ENCODE measurements at regions of chr22 and their contacts with region 1.

Region 1: DNA sequence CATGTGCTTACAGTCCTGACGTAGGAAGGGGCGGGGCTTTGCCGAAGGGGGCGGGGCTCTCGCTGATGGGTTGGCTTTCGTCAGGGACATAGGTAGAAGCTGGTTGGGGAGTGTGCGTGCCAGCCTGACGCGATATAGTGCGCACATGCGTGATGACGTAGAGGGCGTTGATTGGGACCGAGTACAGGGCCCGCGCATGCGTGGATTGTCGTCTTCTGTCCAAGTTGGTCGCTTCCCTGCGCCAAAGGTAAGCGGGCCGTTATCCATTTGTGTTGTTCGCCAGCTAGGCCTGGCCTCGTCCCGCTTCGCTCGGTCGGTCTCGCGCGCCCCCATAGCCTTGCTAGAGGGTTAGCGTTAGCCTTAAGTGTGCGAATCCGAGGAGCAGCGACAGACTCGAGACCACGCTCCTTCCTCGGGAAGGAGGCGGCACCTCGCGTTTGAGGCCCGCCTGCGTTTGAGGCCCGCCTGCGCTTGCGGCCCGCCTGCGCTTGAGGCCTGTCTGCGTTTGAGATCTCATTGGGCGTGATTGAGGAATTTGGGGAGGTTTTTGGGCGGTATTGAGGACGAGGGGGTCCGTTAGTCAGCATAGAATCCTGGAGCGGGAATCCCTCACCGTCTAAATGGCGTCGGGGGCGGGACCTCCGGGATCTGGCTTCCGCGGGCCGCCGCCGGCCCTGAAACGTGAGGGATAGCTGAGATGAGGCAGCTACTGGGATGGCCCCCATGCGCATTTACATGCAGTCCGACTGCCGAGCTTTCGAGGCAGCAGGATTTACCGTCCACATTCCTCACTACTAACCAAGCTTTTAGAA is at the start of gene XRCC6:
- DNase-seq: peak; percentile 97
- H3K4me3 Mint-ChIP-seq: peak within 1 kb of the TSS; percentile 93
- H3K27ac Mint-ChIP-seq: peak within 1 kb of the TSS; percentile 94
- H3K4me1 Mint-ChIP-seq: peaks cover 50% of the 10 kb centered on the region
- H3K27me3 Mint-ChIP-seq: no peaks in the 10 kb centered on the region
- total RNA-seq, gene XRCC6: 367 and 368 TPM in 2 replicates

Region 2: DNA sequence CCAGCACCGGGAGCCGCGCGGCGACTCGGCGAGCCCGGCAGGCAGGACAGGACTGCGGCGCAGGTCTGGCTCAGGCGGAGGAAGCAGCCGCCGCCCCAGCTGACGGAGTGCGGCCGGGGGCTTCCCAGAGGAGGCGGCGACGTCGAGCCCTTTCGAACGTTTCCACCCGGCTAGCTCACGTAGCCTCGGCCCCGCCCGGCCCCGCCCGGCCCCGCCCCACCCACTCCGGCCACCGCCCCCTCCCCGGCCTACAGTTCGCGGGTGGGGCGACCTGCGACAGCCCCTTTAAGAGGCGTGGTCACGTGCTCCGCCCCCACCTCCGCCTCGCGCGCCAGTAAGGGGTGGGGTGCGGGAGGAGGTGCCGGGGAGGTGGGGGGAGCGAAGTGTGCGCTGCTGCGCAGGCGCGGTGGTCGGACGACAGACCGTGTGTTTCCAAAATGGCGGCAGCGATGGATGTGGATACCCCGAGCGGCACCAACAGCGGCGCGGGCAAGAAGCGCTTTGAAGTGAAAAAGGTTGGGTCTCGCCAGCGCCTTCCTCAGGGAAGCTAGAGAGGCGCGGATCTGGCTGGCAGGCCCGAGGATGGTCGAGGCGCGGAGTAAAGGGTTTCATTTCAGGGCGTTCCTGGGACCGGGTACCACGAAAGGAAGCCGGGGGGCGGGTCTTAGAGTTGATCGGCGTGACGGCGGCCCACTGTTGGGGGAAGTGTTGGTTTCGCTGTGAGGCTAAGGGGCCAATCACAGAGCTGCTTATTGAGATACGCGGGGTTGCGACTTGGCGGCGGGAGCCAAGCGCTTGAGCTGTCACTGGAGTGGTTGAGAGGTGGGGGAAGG is 670.1 kb before region 1 on chr22 and contains the start of gene RBX1:
- intact Hi-C with region 1: loop called (anchors 1 kb)
- DNase-seq: peak; percentile 98
- H3K4me3 Mint-ChIP-seq: peak within 1 kb of the TSS; percentile 98
- H3K27ac Mint-ChIP-seq: peak within 1 kb of the TSS; percentile 98
- H3K4me1 Mint-ChIP-seq: peaks cover 33% of the 10 kb centered on the region
- H3K27me3 Mint-ChIP-seq: no peaks in the 10 kb centered on the region
- total RNA-seq, gene RBX1: 90.9 and 94.4 TPM in 2 replicates

Region 3: DNA sequence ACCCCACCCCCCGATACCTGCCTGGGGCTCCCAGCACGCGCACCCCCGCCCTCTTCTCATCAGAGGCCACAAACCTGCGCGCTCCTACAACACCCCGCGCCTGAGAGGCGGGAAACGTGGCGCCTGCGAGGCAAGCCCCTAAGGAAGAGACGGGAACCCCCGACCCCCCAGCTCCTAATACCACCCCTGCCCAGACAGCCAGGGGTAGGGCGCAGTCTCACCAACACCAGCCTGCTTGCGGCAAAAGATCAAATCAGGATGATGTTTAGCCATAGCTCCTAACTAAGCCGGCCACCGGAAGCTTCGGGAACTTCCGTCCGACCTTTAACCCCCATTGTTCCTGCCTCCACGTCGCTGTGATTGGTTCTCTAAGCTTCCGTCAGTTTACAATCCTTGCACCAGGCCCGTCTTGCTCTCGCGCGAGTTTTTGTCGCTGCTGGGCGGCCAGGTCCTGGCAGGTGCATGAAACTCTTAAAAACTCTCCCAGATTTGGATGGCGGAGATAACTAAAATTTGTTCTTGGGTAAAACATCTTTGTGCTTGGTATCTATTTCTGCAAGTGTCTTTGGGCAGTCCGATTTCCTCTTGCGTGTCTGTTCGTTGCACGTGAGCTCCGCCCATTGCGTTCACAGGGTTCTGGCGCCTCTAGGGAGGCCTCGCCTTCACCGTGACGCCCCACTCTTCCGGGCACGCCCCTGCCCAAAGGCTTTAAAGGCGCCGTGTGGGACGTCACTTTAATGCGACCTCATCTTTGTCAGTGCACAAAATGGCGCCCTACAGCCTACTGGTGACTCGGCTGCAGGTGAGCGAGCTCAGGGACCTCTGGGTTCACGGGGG is 152.7 kb before region 1 on chr22 and contains the starts of genes ACO2 and PHF5A:
- intact Hi-C with region 1: loop called (anchors 1 kb)
- DNase-seq: peak; percentile 98
- H3K4me3 Mint-ChIP-seq: peak within 1 kb of the TSS; percentile 87
- H3K27ac Mint-ChIP-seq: peak within 1 kb of the TSS; percentile 99
- H3K4me1 Mint-ChIP-seq: peaks cover 22% of the 10 kb centered on the region
- H3K27me3 Mint-ChIP-seq: no peaks in the 10 kb centered on the region
- total RNA-seq, gene ACO2: 99.1 and 101 TPM in 2 replicates
- total RNA-seq, gene PHF5A: 83.7 and 96.8 TPM in 2 replicates

Region 4: GRCh38 chr22:41603873-41604332 is 17.4 kb before region 1 on chr22:
- intact Hi-C with region 1: loop called (anchors 1 kb)
- DNase-seq: peak; percentile 66
- H3K4me3 Mint-ChIP-seq: no peak overlapping the region
- H3K27ac Mint-ChIP-seq: peak overlapping the region; percentile 62
- H3K4me1 Mint-ChIP-seq: peaks cover 44% of the 10 kb centered on the region
- H3K27me3 Mint-ChIP-seq: peaks cover 9% of the 10 kb centered on the region

Region 5: GRCh38 chr22:41688365-41689211 is 67.3 kb after region 1 on chr22 and contains the start of gene SNU13:
- intact Hi-C with region 1: loop called (anchors 1 kb)
- DNase-seq: peak; percentile 92
- H3K4me3 Mint-ChIP-seq: peak within 1 kb of the TSS; percentile 98
- H3K27ac Mint-ChIP-seq: peak within 1 kb of the TSS; percentile 98
- H3K4me1 Mint-ChIP-seq: peaks cover 17% of the 10 kb centered on the region
- H3K27me3 Mint-ChIP-seq: no peaks in the 10 kb centered on the region
- total RNA-seq, gene SNU13: 337 and 339 TPM in 2 replicates

Region 6: GRCh38 chr22:41699264-41700014 is 78.1 kb after region 1 on chr22 and contains the start of gene MEI1:
- intact Hi-C with region 1: no loop called
- DNase-seq: peak; percentile 84
- H3K4me3 Mint-ChIP-seq: peak within 1 kb of the TSS; percentile 70
- H3K27ac Mint-ChIP-seq: peak within 1 kb of the TSS; percentile 82
- H3K4me1 Mint-ChIP-seq: peaks cover 13% of the 10 kb centered on the region
- H3K27me3 Mint-ChIP-seq: peaks cover 8% of the 10 kb centered on the region
- total RNA-seq, gene MEI1: 22.3 TPM in 2 replicates

Region 7: DNA sequence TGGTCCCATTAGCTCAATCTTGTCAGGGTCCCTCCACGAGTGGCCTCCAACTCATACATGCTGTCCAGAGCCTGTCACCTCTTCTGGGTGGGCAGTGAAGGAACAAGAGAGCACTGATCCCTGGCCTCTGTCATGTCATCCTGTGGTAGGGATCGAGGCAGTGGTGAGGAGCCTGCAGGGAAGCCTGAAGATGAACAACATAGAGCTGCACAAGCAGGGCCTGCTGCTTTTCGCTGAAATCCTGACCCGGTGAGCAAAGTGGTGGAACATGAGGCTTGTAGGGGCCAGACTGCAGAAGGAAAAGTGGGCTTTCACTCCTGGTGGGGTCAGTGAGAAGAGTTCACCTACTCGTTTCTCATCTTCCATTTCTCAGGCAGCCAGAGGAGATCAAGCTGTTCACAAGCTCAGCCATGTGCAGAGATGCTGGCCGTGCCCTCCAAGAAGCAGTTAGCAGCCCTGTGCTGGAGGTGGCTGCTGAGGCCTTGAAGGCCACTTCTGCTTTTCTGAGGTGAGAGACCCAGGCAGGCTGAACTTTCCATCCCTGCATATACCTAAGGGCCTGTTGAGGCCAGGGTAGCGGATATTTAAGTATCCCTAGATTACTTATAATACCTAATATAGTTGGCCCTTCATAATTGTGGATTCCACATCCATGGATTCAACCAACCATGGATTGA is 110.9 kb after region 1 on chr22:
- intact Hi-C with region 1: no loop called
- DNase-seq: no peak
- H3K4me3 Mint-ChIP-seq: no peak overlapping the region
- H3K27ac Mint-ChIP-seq: no peak overlapping the region
- H3K4me1 Mint-ChIP-seq: no peaks in the 10 kb centered on the region
- H3K27me3 Mint-ChIP-seq: no peaks in the 10 kb centered on the region

Region 8: DNA sequence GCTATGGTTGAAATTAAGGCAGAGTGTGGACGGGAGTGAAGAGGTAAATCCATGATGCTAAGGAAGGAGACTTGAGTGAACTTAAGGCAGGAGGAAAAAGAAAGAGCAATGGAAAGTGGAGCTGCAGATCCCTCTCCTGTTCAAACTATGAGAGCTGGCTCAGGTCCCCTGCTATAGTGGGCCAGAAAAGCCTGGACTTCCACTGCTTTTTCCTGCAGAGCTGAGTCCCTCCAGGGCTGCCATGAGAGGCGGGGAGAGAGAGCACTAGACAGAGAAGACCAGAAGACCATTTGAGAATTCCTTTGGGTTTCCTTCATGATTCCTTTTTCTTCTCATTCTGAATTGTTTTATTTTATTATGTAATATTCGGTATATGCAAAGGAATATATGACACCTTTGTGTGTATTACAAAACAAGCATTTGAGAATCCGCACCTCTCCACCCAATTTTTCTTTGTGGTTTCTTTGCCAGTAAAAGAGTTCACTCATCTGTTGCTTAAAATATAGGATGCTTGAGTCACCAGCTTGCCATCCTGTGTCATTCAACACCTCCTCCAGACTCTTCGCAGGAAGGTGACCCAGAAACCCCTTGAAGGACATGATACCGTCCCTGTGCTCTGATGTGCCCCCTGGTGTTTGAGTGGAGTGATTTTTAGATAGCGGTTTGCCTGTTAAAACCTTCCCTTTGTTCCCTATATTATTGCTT is 236.0 kb after region 1 on chr22:
- intact Hi-C with region 1: loop called (anchors 1 kb)
- DNase-seq: peak; percentile 71
- H3K4me3 Mint-ChIP-seq: peak overlapping the region; percentile 60
- H3K27ac Mint-ChIP-seq: peak overlapping the region; percentile 99
- H3K4me1 Mint-ChIP-seq: peaks cover 72% of the 10 kb centered on the region
- H3K27me3 Mint-ChIP-seq: no peaks in the 10 kb centered on the region

Region 9: DNA sequence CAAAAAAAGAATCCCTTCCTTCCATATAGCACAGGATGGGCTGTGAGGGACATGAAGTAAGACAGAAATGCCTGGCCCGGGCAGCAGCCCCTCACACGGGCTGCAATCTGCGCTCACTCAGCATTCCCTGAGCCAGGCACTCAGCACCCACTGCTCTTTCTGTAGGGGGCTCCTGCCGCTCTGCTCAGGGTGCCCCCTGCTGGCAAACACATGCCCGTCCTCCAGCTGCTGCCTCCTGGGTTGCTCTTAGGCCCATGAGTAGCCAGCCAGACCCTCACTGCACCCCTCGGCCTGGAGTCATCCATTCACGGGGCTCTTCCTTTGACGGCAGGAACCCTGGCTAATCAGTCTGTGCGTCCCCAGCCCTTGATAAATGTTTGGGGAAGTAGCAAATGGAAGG is 1515.0 kb after region 1 on chr22:
- intact Hi-C with region 1: no loop called
- DNase-seq: no peak
- H3K4me3 Mint-ChIP-seq: no peak overlapping the region
- H3K27ac Mint-ChIP-seq: no peak overlapping the region
- H3K4me1 Mint-ChIP-seq: peaks cover 7% of the 10 kb centered on the region
- H3K27me3 Mint-ChIP-seq: no peaks in the 10 kb centered on the region